Dendritic cell treated with granulocyte-macrophage colony-stimulating factor and Interleukin-4, amounts not matched to agents 40 ng/mL and 50 ng/mL, for 4 days (primary cell): ENCODE measurements at regions of chr18 and their contacts with region 1.

Region 1: GRCh38 chr18:12531749-12532148 is 124.0 kb downstream of the PRELID3A start:
- H3K4me3 Mint-ChIP-seq: no peak overlapping the region
- H3K27ac Mint-ChIP-seq: no peak overlapping the region
- H3K4me1 Mint-ChIP-seq: peaks cover 5% of the 10 kb centered on the region
- H3K27me3 Mint-ChIP-seq: no peaks in the 10 kb centered on the region

Region 2: DNA sequence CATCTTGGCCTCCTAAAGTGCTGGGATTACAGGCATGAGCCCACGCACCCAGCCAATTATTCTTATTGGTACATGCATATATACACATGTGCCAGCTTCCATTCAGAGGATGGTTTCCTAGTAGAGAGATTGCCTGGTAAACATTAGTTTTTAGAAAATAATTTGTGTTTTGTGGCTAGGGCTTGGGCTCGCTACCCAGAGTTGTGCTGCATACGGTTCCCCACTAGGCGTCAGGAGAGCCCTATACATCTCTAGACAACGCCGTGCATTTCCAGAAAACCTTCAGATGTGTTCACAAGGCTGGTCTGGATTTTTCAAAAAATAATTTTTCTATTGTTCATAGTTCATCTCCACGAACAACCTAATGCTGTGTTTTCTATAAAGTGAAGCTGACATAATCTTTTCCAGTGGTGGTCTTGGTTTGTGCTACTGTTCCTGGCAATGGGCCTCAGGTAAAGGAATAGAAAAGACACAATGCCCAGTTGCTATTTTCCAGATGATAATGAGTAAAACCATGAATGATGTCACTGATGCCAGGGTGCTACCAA is 140.1 kb before region 1 on chr18:
- intact Hi-C with region 1: loop called (anchors 10 kb)
- H3K4me3 Mint-ChIP-seq: no peak overlapping the region
- H3K27ac Mint-ChIP-seq: no peak overlapping the region
- H3K4me1 Mint-ChIP-seq: peaks cover 6% of the 10 kb centered on the region
- H3K27me3 Mint-ChIP-seq: peaks cover 8% of the 10 kb centered on the region

Region 3: DNA sequence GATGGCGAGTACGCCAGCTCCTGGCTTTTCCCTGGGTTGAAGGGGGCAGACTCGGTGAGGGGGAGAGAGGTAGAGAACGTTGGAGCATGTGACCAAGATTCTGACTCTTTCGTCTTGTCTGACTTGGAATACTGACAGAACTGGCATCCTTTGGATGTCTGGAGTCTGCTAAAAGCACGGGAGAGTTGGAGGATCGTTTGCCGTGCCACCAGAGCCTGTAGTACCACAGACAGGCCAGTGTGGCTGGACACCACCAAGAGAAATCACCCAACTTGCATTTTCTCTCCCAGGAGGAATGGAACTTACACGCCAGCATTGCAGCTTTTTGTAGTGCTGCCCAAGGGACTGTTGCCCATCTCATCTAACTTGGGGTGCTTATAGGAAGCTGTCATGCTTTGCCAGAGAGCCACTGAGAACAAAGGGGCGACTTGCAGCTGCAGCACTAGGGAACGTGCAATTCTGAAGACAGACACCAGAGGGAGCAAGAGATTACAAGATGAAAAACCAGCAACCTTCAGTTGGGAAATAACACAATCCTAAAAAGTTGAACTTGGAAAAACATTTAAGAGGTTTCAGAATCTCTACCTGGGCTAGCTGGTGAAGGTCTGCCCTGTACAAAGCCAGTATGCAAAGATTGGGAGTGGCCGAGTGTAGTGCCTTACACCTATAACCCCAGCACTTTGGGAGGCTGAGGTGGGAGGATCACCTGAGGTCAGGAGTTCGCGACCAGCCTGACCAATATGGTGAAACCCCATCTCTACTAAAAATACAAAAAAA is 195.2 kb after region 1 on chr18:
- intact Hi-C with region 1: no loop called
- H3K4me3 Mint-ChIP-seq: no peak overlapping the region
- H3K27ac Mint-ChIP-seq: peak overlapping the region; percentile 47
- H3K4me1 Mint-ChIP-seq: peaks cover 5% of the 10 kb centered on the region
- H3K27me3 Mint-ChIP-seq: no peaks in the 10 kb centered on the region